MCF 10A (cell line): ENCODE measurements at regions of chr6 and their contacts with region 1.

Region 1: GRCh38 chr6:17987576-17988421 is at the start of gene KIF13A:
- DNase-seq: peak; percentile 46
- H3K4me3 Mint-ChIP-seq: peak within 1 kb of the TSS; percentile 83
- H3K27ac Mint-ChIP-seq: peak within 1 kb of the TSS; percentile 88
- H3K4me1 Mint-ChIP-seq: peaks cover 32% of the 10 kb centered on the region
- H3K27me3 Mint-ChIP-seq: no peaks in the 10 kb centered on the region
- CTCF ChIP-seq: no peak
- total RNA-seq, gene KIF13A: 24.1 and 33.5 TPM in 2 replicates

Region 2: DNA sequence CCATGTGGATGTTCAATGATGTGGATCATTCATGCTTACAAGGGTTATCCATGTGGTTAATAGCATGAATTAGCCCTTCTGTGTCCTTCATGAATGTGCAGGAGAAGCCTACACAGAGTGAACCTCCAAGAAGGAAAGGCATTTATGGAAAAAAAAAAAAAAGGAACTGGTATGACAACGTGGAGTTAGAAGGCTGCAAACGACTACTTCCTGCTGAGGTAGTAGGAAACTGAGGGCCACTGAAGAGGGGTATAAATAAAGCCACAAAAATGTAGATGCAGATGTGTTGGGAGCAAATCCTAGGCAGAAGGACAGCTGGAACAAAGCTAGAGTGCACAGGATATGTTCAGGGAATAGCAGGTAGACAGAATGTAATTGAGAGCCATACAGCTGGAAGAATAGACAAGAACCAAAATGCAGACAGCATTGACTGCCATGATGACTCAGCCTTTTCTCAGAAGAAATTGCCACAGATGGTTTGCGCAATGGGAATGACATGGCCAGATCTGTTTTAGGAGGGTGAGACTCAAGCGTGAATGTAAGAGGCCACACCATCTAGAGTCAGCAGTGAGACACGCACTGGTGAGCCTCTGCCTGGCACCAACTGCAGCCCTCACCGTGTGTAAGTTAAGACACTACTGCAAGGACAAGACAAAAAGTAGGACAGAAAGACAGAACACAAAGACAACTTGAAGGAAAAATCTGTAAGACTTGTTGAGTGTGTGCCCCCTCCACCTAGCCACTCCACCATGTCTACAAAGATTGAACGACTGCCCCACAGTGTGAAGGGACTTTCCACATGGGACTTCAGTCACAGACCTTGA is 80.2 kb before region 1 on chr6:
- CTCF ChIA-PET with region 1: no interaction called
- POLR2A ChIA-PET with region 1: interaction called, 6 read pairs
- intact Hi-C with region 1: loop called (anchors 2 kb)
- DNase-seq: peak; percentile 99
- H3K4me3 Mint-ChIP-seq: peak overlapping the region; percentile 42
- H3K27ac Mint-ChIP-seq: peak overlapping the region; percentile 92
- H3K4me1 Mint-ChIP-seq: peaks cover 42% of the 10 kb centered on the region
- H3K27me3 Mint-ChIP-seq: no peaks in the 10 kb centered on the region
- CTCF ChIP-seq: peak; percentile 28

Region 3: GRCh38 chr6:17971128-17972073 is 16.4 kb before region 1 on chr6:
- CTCF ChIA-PET with region 1: no interaction called
- POLR2A ChIA-PET with region 1: interaction called, 18 read pairs
- intact Hi-C with region 1: no loop called
- DNase-seq: peak; percentile 88
- H3K4me3 Mint-ChIP-seq: peak overlapping the region; percentile 14
- H3K27ac Mint-ChIP-seq: peak overlapping the region; percentile 79
- H3K4me1 Mint-ChIP-seq: peaks cover 42% of the 10 kb centered on the region
- H3K27me3 Mint-ChIP-seq: no peaks in the 10 kb centered on the region
- CTCF ChIP-seq: no peak

Region 4: GRCh38 chr6:18264219-18264922 is 276.6 kb after region 1 on chr6 and contains the start of gene DEK:
- CTCF ChIA-PET with region 1: no interaction called
- POLR2A ChIA-PET with region 1: interaction called, 9 read pairs
- intact Hi-C with region 1: loop called (anchors 5 kb)
- DNase-seq: peak; percentile 83
- H3K4me3 Mint-ChIP-seq: peak within 1 kb of the TSS; percentile 96
- H3K27ac Mint-ChIP-seq: peak within 1 kb of the TSS; percentile 81
- H3K4me1 Mint-ChIP-seq: peaks cover 36% of the 10 kb centered on the region
- H3K27me3 Mint-ChIP-seq: no peaks in the 10 kb centered on the region
- CTCF ChIP-seq: peak; percentile 61
- total RNA-seq, gene DEK: 118 and 148 TPM in 2 replicates